Endothelial cell of umbilical vein (primary cell): ENCODE measurements at regions of chr17 and their contacts with region 1.

Region 1: GRCh38 chr17:64129764-64130558 is at the start of gene ERN1:
- DNase-seq: peak; percentile 92
- H3K4me3 ChIP-seq: peak within 1 kb of the TSS; percentile 68 to 92 (median 73)
- H3K27ac ChIP-seq: peak within 1 kb of the TSS; percentile 91
- H3K4me1 ChIP-seq: peaks cover 23% of the 10 kb centered on the region
- H3K27me3 ChIP-seq: no peaks in the 10 kb centered on the region
- CTCF ChIP-seq: no peak
- POLR2A ChIP-seq: peak; percentile 97
- total RNA-seq, gene ERN1: 14.7 and 21.5 TPM in 2 replicates

Region 2: DNA sequence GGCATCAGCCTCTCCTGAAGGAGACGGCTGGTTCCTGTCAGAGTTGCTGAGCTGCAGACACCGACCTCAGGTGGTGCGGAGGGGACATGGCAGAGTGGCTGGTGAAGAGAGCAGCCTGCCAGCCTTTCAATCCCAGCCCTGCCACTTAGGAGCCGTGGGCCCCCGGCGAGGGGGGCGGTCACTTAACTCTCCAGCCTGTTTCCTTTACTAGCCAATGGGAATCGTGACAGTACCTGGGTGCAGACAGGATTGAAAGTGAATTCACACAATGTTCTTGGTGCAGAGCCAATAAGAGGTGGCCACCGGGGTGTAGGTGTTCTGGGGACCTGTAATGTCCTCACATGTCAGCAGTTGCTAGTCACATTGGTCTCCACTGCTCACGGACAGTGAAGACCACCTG is 639.6 kb before region 1 on chr17:
- CTCF ChIA-PET with region 1: no interaction called
- POLR2A ChIA-PET with region 1: no interaction called
- dilution Hi-C with region 1: no loop called
- intact Hi-C with region 1: no loop called
- DNase-seq: no peak
- H3K4me3 ChIP-seq: no peak overlapping the region
- H3K27ac ChIP-seq: no peak overlapping the region
- H3K4me1 ChIP-seq: no peaks in the 10 kb centered on the region
- H3K27me3 ChIP-seq: no peaks in the 10 kb centered on the region
- CTCF ChIP-seq: no peak
- POLR2A ChIP-seq: no peak

Region 3: GRCh38 chr17:63931099-63931561 is 198.8 kb before region 1 on chr17:
- CTCF ChIA-PET with region 1: interaction called, 15 read pairs
- POLR2A ChIA-PET with region 1: no interaction called
- dilution Hi-C with region 1: no loop called
- intact Hi-C with region 1: no loop called
- DNase-seq: no peak
- H3K4me3 ChIP-seq: no peak overlapping the region
- H3K27ac ChIP-seq: no peak overlapping the region
- H3K4me1 ChIP-seq: peaks cover 4% of the 10 kb centered on the region
- H3K27me3 ChIP-seq: no peaks in the 10 kb centered on the region
- CTCF ChIP-seq: no peak
- POLR2A ChIP-seq: no peak

Region 4: DNA sequence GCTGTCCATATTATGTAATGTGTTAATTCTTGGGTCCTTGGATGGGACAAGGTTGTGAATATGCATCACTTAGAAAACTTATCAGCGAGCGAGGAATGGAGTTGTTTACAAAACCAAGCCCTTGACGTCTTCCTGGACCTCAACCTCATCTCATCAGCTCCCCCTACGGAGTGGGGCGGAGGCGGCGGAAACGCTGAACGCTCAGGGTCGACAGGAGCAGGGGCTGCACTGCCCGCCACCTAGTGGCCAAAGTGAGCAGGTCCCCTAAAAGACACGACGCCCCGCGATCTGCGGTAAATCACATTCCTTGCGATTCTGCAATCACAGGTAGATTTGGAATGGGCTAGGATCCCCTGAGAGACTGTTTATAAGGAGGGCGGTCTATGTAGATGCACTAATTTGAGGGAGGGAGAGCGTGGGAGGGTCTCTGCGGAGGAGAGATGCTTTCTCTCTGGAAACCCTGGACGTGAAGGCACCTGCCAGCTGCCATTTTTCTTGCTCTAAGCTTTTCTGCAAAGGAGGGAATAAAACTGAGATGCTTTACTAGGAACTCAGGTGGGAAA is 104.1 kb before region 1 on chr17:
- CTCF ChIA-PET with region 1: interaction called, 802 read pairs
- POLR2A ChIA-PET with region 1: interaction called, 12 read pairs
- dilution Hi-C with region 1: loop called (anchors 25 kb)
- intact Hi-C with region 1: loop called (anchors 1 kb)
- DNase-seq: peak; percentile 82
- H3K4me3 ChIP-seq: no peak overlapping the region
- H3K27ac ChIP-seq: peak overlapping the region; percentile 43
- H3K4me1 ChIP-seq: peaks cover 29% of the 10 kb centered on the region
- H3K27me3 ChIP-seq: no peaks in the 10 kb centered on the region
- CTCF ChIP-seq: peak; percentile 98
- POLR2A ChIP-seq: no peak

Region 5: GRCh38 chr17:64063766-64064224 is 66.2 kb before region 1 on chr17:
- CTCF ChIA-PET with region 1: interaction called, 234 read pairs
- POLR2A ChIA-PET with region 1: interaction called, 8 read pairs
- dilution Hi-C with region 1: no loop called
- intact Hi-C with region 1: loop called (anchors 1 kb)
- DNase-seq: peak; percentile 73
- H3K4me3 ChIP-seq: no peak overlapping the region
- H3K27ac ChIP-seq: no peak overlapping the region
- H3K4me1 ChIP-seq: peaks cover 22% of the 10 kb centered on the region
- H3K27me3 ChIP-seq: no peaks in the 10 kb centered on the region
- CTCF ChIP-seq: peak; percentile 60 to 71
- POLR2A ChIP-seq: no peak

Region 6: DNA sequence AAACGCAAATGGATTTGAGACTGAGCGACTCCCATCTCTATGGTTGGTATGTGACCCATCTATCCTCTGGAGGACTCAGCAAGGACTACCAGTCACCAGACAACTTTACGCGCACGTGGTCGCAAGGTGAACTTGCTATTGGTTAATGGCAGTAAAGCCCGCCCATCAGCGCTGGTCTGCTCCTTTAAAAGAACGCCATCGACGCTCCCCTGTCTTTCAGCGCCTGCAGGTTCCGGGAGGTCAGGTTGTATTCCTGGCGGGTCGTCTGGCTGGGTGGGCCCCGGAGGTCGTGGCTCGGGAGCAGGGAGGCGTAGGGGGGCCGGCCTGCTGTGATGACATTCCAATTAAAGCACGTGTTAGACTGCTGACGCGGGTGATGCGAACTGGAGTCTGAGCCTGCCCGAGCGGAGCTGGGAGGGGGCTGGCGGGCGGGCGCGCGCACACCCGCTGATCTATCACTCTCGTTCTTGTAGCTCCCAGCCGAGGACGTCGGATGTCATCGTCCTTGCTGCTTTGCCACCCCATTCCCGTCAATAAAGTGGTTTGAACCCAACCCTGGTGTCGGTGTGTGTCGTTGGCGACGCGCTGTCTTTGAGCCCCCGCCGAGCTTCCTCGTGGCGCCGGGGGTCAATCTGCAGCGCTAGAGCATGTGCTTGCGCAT is 15.9 kb after region 1 on chr17:
- CTCF ChIA-PET with region 1: interaction called, 48 read pairs
- POLR2A ChIA-PET with region 1: interaction called, 12 read pairs
- dilution Hi-C with region 1: no loop called
- intact Hi-C with region 1: loop called (anchors 1 kb)
- DNase-seq: peak; percentile 99
- H3K4me3 ChIP-seq: peak overlapping the region; percentile 31 to 72 (median 64)
- H3K27ac ChIP-seq: peak overlapping the region; percentile 63
- H3K4me1 ChIP-seq: peaks cover 21% of the 10 kb centered on the region
- H3K27me3 ChIP-seq: no peaks in the 10 kb centered on the region
- CTCF ChIP-seq: no peak
- POLR2A ChIP-seq: peak; percentile 100

Region 7: GRCh38 chr17:64223931-64224629 is 94.1 kb after region 1 on chr17:
- CTCF ChIA-PET with region 1: no interaction called
- POLR2A ChIA-PET with region 1: no interaction called
- dilution Hi-C with region 1: no loop called
- intact Hi-C with region 1: no loop called
- DNase-seq: no peak
- H3K4me3 ChIP-seq: no peak overlapping the region
- H3K27ac ChIP-seq: no peak overlapping the region
- H3K4me1 ChIP-seq: no peaks in the 10 kb centered on the region
- H3K27me3 ChIP-seq: no peaks in the 10 kb centered on the region
- CTCF ChIP-seq: no peak
- POLR2A ChIP-seq: no peak

Region 8: GRCh38 chr17:64291254-64291851 is 161.4 kb after region 1 on chr17:
- CTCF ChIA-PET with region 1: interaction called, 18 read pairs
- POLR2A ChIA-PET with region 1: no interaction called
- dilution Hi-C with region 1: no loop called
- intact Hi-C with region 1: no loop called
- DNase-seq: no peak
- H3K4me3 ChIP-seq: no peak overlapping the region
- H3K27ac ChIP-seq: no peak overlapping the region
- H3K4me1 ChIP-seq: no peaks in the 10 kb centered on the region
- H3K27me3 ChIP-seq: no peaks in the 10 kb centered on the region
- CTCF ChIP-seq: peak in 1 of 2 donors; percentile 48
- POLR2A ChIP-seq: no peak